Transverse colon (tissue), 4 donors: ENCODE measurements at regions of chr15 and their contacts with region 1.

Region 1: GRCh38 chr15:39645976-39646257 is 65.0 kb downstream of the THBS1 start:
- DNase-seq: no peak
- H3K4me3 ChIP-seq: no peak overlapping the region
- H3K27ac ChIP-seq: no peak overlapping the region
- H3K4me1 ChIP-seq: peaks cover 13 to 45% (median 25%) of the 10 kb centered on the region in 4 donors
- H3K27me3 ChIP-seq: no peaks in the 10 kb centered on the region
- CTCF ChIP-seq: no peak
- EP300 ChIP-seq: no peak
- POLR2A ChIP-seq: no peak

Region 2: DNA sequence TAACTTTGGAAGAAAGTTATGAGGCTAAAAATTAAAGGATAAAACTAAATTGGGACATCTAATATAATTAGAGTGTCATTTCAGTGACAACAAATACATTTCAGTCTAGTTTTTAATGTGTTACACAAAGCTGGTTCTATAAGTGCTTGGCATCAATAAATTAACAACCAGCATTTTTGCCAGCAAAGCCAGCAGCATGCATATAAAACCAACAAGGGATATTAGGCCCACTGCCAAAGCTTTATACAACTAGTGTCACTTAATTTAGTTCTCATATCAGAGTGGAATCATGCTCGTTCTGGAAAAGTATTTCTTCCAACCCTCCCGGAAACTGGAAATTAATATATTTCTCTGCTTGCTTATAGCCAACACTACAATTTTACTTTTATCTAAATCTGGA is 23.7 kb after region 1 on chr15:
- in situ Hi-C with region 1: no loop called
- intact Hi-C with region 1: no loop called
- DNase-seq: no peak
- H3K4me3 ChIP-seq: no peak overlapping the region
- H3K27ac ChIP-seq: no peak overlapping the region
- H3K4me1 ChIP-seq: peaks cover 0 to 6% (median 3%) of the 10 kb centered on the region in 4 donors
- H3K27me3 ChIP-seq: no peaks in the 10 kb centered on the region
- CTCF ChIP-seq: no peak
- EP300 ChIP-seq: no peak
- POLR2A ChIP-seq: no peak

Region 3: DNA sequence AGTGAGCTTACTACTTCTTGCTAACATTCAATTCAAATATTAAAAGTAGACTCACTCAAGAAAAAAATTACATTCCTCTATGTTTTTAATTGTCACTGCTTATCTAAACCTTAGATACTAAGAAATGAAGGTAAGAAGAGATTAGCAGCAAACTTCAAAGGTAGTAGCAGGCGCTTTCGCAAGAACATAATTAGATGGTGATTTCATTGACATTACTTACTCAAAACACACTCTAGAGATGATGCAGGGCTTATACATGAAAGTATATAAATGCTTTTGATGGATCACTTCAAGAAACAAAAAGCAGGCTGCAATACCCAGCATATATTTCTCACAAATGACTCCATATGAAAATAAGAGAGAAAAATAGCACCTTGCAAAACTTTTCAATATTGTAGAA is 49.9 kb after region 1 on chr15:
- in situ Hi-C with region 1: no loop called
- intact Hi-C with region 1: loop called (anchors 2 kb)
- DNase-seq: no peak
- H3K4me3 ChIP-seq: no peak overlapping the region
- H3K27ac ChIP-seq: no peak overlapping the region
- H3K4me1 ChIP-seq: peaks cover 3 to 12% (median 5%) of the 10 kb centered on the region in 4 donors
- H3K27me3 ChIP-seq: no peaks in the 10 kb centered on the region
- CTCF ChIP-seq: no peak
- EP300 ChIP-seq: no peak
- POLR2A ChIP-seq: no peak